Sciatic nerve (tissue), 2 donors: ENCODE measurements at regions of chr20 and their contacts with region 1.

Region 1: DNA sequence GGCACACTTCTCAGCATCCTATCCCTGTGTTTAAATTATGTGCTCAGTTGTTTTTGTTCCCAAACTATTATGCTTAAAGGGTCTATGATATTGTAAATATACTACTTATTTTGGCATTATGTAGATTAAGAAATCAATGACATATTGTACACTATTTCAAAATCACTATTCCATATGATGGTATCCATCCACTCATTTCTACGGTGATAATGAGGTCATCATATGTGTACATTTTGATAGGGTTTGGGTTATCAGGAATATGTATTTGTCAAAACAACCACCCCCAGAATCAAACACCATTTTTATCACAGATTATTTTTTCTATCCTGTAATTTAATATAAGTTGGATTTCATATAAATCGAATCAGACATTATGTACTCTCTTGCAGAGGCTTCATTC is 684.5 kb downstream of the CBLN4 start:
- DNase-seq: no peak
- ATAC-seq: no peak

Region 2: GRCh38 chr20:54335299-54335698 is 985.5 kb before region 1 on chr20:
- intact Hi-C with region 1: loop called (anchors 5 kb)
- DNase-seq: no peak
- ATAC-seq: no peak

Region 3: GRCh38 chr20:55269913-55270312 is 50.9 kb before region 1 on chr20:
- intact Hi-C with region 1: no loop called
- DNase-seq: no peak
- ATAC-seq: no peak